Pancreas (tissue), 10 donors: ENCODE measurements at regions of chr14 and their contacts with region 1.

Region 1: DNA sequence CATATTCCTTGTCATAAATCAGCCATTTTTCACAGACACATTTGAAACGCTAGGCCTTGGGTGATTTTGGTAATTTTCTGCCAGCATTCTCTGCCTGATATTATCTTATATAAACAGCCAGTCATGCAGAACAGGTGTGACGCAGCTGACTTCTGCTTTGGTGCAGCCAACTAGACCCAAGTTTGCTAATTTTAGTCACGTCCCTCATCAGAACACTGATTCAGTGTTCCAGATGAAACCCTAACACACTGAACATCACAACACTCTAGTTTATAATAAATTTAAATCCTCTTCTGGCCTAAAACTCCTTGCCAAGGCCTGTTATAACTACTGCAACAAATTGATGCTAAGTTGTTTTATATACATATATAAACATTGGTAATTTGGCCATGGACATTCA is 386.1 kb downstream of the SEC23A start:
- DNase-seq: peak in 2 of 6 donors; percentile 17 to 22
- ATAC-seq: peak; percentile 61 to 88 (median 80)
- H3K4me3 ChIP-seq: no peak overlapping the region
- H3K27ac ChIP-seq: no peak overlapping the region
- H3K4me1 ChIP-seq: peaks cover 0 to 9% (median 0%) of the 10 kb centered on the region in 3 donors
- H3K27me3 ChIP-seq: no peaks in the 10 kb centered on the region
- CTCF ChIP-seq: no peak

Region 2: DNA sequence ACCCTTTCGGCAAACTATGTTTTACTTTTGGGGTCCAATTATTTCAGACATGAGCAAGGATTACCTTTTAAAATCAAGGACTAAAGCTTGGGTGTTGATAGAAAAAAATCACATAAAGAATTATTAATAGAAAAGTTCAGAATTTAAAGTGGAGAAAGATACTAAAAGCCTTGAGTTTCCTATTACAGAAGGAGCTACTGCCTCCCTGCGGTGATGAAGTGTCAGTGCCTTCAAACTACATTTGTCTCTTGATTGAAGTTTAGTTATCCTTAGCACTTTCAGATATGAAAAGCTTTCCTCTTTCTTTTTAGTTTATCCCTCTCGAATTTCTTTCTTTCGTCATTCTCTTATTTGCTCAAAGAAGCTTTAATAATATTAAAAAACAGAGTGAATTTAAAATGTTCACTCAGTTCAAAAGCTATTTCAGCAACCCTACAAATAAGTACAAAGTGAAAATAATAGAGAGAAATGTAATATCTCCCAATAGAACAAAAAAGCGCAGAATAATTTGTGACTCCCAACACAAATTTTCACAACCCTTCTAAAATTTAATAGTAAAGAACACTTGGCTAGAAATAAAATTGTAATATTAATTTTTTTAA is 298.5 kb after region 1 on chr14:
- intact Hi-C with region 1: loop called in 1 of 3 experiments (anchors 10 kb)
- DNase-seq: peak in 1 of 6 donors; percentile 25
- ATAC-seq: peak in 3 of 4 donors; percentile 80 to 85 (median 85)
- H3K4me3 ChIP-seq: no peak overlapping the region
- H3K27ac ChIP-seq: no peak overlapping the region
- H3K4me1 ChIP-seq: no peaks in the 10 kb centered on the region
- H3K27me3 ChIP-seq: no peaks in the 10 kb centered on the region
- CTCF ChIP-seq: peak; percentile 45 to 72 (median 64)